Ascending aorta (tissue), 2 donors: ENCODE measurements at regions of chr5 and their contacts with region 1.

Region 1: DNA sequence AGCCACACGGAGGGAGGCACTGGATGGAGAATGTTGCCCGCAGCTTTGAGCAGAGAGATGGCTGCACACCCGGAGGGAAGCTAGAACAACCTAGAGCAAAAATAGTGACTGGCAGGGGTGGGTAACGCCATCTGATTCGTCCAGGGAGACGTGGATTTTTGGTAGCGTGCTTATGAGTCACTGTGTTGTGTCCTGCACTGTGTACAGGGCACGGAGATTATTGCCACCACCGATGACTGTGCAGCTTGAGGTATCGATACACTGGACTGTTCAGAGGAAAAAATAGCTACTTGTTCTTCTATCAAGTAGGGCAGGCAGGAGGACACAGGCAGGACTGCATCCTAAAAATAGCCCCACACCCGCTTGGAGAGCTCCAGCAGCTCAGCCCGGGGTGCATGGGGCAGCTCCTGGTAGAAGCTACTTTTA is 6.0 kb downstream of the UBE2QL1 start:
- DNase-seq: peak in 1 of 2 donors; percentile 79
- H3K4me3 ChIP-seq: peak overlapping the region in 1 of 2 donors; percentile 42
- H3K27ac ChIP-seq: peak overlapping the region; percentile 50 to 71
- H3K4me1 ChIP-seq: peaks cover 0 to 26% of the 10 kb centered on the region in 2 donors
- H3K27me3 ChIP-seq: no peaks in the 10 kb centered on the region
- CTCF ChIP-seq: no peak

Region 2: DNA sequence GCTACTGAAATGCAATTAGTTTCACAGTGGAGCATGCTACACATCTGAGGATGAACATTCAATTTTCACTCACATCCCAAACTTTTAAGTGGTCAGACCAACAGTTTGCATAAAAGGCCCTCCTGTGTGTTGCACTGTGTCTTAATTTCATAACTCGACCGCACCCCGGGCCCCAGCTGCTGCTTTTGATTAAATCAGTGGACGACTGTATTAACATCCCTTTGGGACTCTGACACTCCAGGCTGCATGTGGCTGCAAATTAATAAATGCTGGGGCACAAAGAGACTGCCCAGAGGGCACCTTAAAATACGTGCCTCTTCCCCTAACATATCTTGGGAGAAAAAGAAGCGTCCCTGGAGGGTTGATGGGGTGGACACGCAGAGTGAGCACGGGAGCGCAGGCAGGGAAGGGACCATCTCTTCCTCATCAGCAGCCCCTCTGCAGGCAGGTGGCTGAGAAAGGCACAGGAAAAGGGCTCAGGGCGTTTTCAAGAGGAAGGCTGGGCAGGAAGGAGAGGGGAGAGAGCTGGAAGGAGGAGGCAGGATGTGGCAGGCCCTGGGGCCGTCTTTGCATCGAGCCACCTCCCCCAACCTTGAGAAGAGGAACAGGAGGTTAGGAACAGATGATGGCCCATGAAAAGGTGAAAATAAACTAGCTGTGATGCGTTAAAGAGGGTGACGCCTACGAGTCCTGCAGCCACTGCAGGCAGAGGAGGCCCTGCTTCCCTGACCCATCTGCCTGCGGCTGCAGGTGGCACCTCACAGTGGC is 94.9 kb before region 1 on chr5:
- intact Hi-C with region 1: no loop called
- DNase-seq: peak in 1 of 2 donors; percentile 35
- H3K4me3 ChIP-seq: no peak overlapping the region
- H3K27ac ChIP-seq: no peak overlapping the region
- H3K4me1 ChIP-seq: no peaks in the 10 kb centered on the region
- H3K27me3 ChIP-seq: no peaks in the 10 kb centered on the region
- CTCF ChIP-seq: no peak

Region 3: GRCh38 chr5:6384856-6385255 is 69.8 kb before region 1 on chr5:
- intact Hi-C with region 1: no loop called
- DNase-seq: peak in 1 of 2 donors; percentile 53
- H3K4me3 ChIP-seq: no peak overlapping the region
- H3K27ac ChIP-seq: no peak overlapping the region
- H3K4me1 ChIP-seq: no peaks in the 10 kb centered on the region
- H3K27me3 ChIP-seq: no peaks in the 10 kb centered on the region
- CTCF ChIP-seq: no peak

Region 4: DNA sequence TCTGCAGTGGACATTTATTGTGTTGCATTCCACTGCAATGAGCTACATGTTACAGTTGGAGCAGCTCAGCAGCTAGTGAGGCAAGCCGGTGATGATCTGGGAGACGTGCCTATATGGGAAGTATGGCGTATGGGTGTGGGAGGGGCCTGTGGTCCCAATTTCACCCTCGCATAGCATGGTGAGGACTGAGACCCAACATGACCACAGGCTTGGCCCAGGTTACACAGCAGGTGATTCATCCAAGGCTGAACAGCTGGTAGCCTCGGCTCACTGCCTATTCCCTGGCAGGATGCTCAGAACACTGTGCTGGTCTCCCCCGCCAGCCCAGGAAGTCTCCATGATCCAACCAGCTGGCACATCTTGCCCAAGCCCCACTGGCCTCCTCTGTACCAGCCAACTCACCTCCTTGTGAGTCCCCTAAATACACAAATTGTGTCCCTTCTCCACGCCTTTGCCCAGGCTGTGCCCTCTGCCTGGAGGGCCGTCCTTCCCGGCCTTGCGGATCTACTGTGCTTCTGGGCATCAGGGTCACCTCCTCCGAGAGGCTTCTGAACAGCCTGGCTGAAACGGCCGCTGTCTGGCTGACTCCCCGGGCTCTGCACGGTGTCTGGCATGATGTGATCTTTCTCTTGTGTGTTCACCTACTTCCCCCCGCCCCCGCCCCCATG is 96.8 kb after region 1 on chr5:
- intact Hi-C with region 1: loop called (anchors 5 kb)
- DNase-seq: peak; percentile 81 to 85
- H3K4me3 ChIP-seq: peak overlapping the region in 1 of 2 donors; percentile 2
- H3K27ac ChIP-seq: peak overlapping the region; percentile 64 to 73
- H3K4me1 ChIP-seq: peaks cover 0 to 15% of the 10 kb centered on the region in 2 donors
- H3K27me3 ChIP-seq: no peaks in the 10 kb centered on the region
- CTCF ChIP-seq: no peak

Region 5: GRCh38 chr5:6583049-6583880 is 128.6 kb after region 1 on chr5:
- intact Hi-C with region 1: no loop called
- DNase-seq: no peak
- H3K4me3 ChIP-seq: peak overlapping the region; percentile 61 to 75
- H3K27ac ChIP-seq: no peak overlapping the region
- H3K4me1 ChIP-seq: peaks cover 4 to 14% of the 10 kb centered on the region in 2 donors
- H3K27me3 ChIP-seq: no peaks in the 10 kb centered on the region
- CTCF ChIP-seq: peak in 2 of 3 experiments; percentile 48 to 64

Region 6: GRCh38 chr5:6595405-6595804 is 140.8 kb after region 1 on chr5:
- intact Hi-C with region 1: no loop called
- DNase-seq: no peak
- H3K4me3 ChIP-seq: no peak overlapping the region
- H3K27ac ChIP-seq: no peak overlapping the region
- H3K4me1 ChIP-seq: peaks cover 0 to 7% of the 10 kb centered on the region in 2 donors
- H3K27me3 ChIP-seq: no peaks in the 10 kb centered on the region
- CTCF ChIP-seq: no peak